ENCODE measurements at regions of chr11 and their contacts with region 1.

Region 1: GRCh38 chr11:59918987-59919589 is 19.1 kb upstream of the OOSP1 start:
- DNase-seq: peak; percentile 68
- H3K4me3 ChIP-seq: no peak overlapping the region
- H3K27ac ChIP-seq: peak overlapping the region; percentile 47
- H3K4me1 ChIP-seq: peaks cover 6% of the 10 kb centered on the region
- H3K27me3 ChIP-seq: no peaks in the 10 kb centered on the region
- CTCF ChIP-seq: peak; percentile 67 to 75

Region 2: DNA sequence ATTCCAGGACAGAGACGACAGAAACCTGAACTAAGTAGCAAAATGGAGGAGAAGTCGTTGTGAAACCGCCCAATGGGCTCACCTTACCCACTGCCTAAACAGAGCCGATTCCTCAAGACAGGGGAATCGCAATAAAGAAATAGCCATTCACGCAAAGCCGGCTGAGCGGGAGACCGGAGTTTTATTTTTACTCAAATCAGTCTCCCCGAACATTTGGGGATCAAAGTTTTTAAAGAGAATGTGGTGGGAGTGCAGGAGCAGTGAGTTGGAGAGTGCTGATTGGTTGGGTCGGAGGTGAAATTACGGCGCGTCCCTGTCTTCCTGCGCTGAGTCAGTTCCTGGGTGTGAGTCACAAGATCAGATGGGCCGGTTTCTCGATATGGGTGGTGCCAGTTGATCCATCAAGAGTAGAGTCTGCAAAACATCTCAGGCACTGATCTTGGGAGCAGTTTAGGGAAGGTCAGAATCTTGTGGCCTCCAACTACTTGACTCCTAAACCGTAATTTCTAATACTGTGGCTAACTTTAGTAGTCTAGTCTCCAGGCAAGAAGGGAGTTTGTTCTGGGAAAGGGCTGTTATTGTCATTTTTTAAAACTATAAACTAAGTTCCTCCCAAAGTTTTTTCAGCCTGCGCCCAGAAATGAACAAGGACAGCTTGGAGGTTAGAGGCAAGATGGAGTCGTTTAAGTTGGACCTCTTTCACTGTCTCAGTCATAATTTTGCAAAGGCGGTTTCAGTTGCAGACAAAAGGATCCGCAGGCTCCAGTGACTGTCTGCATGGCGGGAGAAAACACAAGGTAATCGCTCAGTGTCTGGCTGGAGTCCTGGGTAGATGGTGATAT is 373.7 kb before region 1 on chr11:
- CTCF ChIA-PET with region 1: no interaction called
- dilution Hi-C with region 1: no loop called
- in situ Hi-C with region 1: no loop called
- intact Hi-C with region 1: no loop called
- DNase-seq: no peak
- H3K4me3 ChIP-seq: no peak overlapping the region
- H3K27ac ChIP-seq: no peak overlapping the region
- H3K4me1 ChIP-seq: peaks cover 9% of the 10 kb centered on the region
- H3K27me3 ChIP-seq: no peaks in the 10 kb centered on the region
- CTCF ChIP-seq: no peak

Region 3: GRCh38 chr11:59698506-59698905 is 220.6 kb before region 1 on chr11:
- CTCF ChIA-PET with region 1: no interaction called
- dilution Hi-C with region 1: no loop called
- in situ Hi-C with region 1: no loop called
- intact Hi-C with region 1: no loop called
- DNase-seq: no peak
- H3K4me3 ChIP-seq: no peak overlapping the region
- H3K27ac ChIP-seq: no peak overlapping the region
- H3K4me1 ChIP-seq: no peaks in the 10 kb centered on the region
- H3K27me3 ChIP-seq: no peaks in the 10 kb centered on the region
- CTCF ChIP-seq: no peak

Region 4: DNA sequence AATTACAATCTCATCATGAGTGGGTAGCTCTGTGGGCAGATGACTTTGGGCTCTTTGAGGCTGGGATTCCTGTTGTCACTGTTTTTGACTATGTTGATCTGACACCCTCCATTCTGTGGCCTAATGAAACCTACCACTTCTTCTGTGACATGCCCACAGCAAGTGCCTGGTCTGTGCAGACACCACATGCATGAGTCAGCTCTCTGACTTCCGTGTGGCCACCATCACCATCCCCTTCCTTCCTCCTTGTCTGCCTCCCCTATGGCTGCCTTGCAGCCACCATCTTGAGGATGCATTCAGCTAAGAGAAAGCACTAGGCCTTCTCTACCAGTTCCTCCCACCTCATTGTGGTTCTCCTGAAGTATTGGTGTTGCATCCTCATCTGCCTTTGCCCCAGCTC is 190.2 kb before region 1 on chr11:
- CTCF ChIA-PET with region 1: no interaction called
- dilution Hi-C with region 1: no loop called
- in situ Hi-C with region 1: loop called in 1 of 2 experiments (anchors 25 kb)
- intact Hi-C with region 1: no loop called
- DNase-seq: no peak
- H3K4me3 ChIP-seq: no peak overlapping the region
- H3K27ac ChIP-seq: no peak overlapping the region
- H3K4me1 ChIP-seq: no peaks in the 10 kb centered on the region
- H3K27me3 ChIP-seq: no peaks in the 10 kb centered on the region
- CTCF ChIP-seq: no peak

Region 5: DNA sequence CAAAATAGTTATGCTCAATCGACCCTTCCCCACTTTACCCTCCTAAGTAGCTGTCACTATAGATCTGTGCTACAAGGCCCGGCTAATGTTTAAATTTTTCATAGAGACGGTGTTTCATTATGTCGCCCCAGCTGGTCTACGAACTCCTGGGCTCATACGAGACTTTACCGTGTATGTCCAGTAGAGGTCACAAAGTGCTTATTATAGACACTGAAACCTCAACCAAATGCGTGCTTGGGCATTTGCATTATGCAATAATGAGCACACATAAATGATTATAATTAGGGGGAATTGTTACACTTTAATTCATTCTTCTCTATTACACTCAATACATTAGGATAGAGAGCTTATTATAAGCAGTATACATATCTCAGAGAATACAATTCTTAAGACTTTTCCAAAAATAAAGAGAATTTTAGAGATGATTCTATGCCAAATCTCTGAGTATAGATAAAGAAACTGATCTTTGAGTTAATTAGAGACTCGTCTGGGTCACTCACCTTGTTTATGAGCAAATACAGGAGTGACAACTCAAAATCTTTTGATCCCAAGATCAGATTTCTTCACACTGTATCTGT is 96.0 kb before region 1 on chr11:
- CTCF ChIA-PET with region 1: interaction called, 7 read pairs
- dilution Hi-C with region 1: no loop called
- in situ Hi-C with region 1: loop called (anchors 5 to 10 kb)
- intact Hi-C with region 1: loop called (anchors 1 kb)
- DNase-seq: peak; percentile 65
- H3K4me3 ChIP-seq: no peak overlapping the region
- H3K27ac ChIP-seq: no peak overlapping the region
- H3K4me1 ChIP-seq: no peaks in the 10 kb centered on the region
- H3K27me3 ChIP-seq: no peaks in the 10 kb centered on the region
- CTCF ChIP-seq: peak; percentile 71 to 73

Region 6: DNA sequence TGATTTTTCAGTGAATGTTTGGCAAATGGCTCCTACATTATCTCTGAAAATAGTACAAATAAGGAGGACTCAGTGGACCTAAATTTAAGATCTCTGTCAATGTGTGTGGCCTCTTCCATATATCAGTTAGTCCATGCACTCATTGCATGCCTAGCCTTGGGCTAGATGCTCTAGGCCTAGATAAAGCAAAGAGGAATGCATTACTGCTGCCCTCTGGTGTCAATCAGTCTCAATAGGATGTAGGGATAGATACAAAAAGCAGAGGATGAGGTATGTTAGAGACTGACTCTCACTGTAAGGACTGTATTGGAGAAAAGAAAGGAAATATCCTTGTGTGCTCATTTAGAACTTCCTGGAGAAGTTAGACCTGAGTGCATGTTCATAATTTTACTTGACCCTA is 211.4 kb after region 1 on chr11:
- CTCF ChIA-PET with region 1: interaction called, 10 read pairs
- dilution Hi-C with region 1: no loop called
- in situ Hi-C with region 1: no loop called
- intact Hi-C with region 1: loop called (anchors 1 kb)
- DNase-seq: peak; percentile 57
- H3K4me3 ChIP-seq: no peak overlapping the region
- H3K27ac ChIP-seq: no peak overlapping the region
- H3K4me1 ChIP-seq: peaks cover 23% of the 10 kb centered on the region
- H3K27me3 ChIP-seq: no peaks in the 10 kb centered on the region
- CTCF ChIP-seq: peak; percentile 47 to 55

Region 7: DNA sequence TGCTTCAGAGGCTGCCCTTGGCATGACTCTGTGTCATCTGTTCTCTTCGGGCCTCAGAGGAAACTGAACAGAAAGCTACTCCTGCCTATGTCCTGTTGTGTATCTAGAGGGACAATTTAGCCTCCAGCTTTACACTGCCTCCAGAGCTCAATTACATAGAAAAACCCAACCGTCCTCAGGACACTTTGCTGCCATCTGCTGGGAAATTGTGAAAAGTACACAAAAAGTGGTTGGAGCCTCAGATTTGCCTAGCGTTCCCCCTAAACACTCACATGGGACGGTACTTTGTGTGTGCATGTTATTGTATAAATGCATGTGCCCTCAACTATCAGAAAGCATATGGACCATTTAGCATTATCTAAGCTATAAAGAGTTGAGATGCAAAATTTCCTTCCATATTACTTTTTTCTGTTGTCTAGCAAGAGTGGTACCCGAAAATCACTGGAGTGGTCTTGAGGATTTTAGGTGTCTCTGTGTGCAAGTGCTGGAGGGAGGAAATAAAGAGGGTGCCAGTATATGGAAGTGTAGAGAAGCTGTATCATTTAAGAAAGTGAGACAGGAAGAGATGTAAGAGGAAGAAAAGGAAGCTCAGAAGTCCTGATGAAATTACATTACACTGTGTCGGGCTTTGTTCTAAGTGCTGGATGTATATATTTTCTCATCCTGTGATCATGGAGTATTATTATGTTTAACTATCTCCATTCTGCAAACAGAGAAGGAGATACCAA is 332.6 kb after region 1 on chr11:
- CTCF ChIA-PET with region 1: no interaction called
- dilution Hi-C with region 1: no loop called
- in situ Hi-C with region 1: no loop called
- intact Hi-C with region 1: loop called (anchors 1 kb)
- DNase-seq: peak; percentile 34
- H3K4me3 ChIP-seq: no peak overlapping the region
- H3K27ac ChIP-seq: no peak overlapping the region
- H3K4me1 ChIP-seq: no peaks in the 10 kb centered on the region
- H3K27me3 ChIP-seq: peaks cover 8% of the 10 kb centered on the region
- CTCF ChIP-seq: peak; percentile 48 to 67